T-cell (primary cell): ENCODE measurements at regions of chr1 and their contacts with region 1.

Region 1: GRCh38 chr1:47192458-47193384 is 2.9 kb upstream of the PDZK1IP1 start:
- DNase-seq: peak; percentile 8 to 77 (median 49)
- ATAC-seq: peak; percentile 57 to 77 (median 74)
- H3K4me3 ChIP-seq: no peak overlapping the region
- H3K4me3 Mint-ChIP-seq: no peak overlapping the region
- H3K27ac ChIP-seq: no peak overlapping the region
- H3K27ac Mint-ChIP-seq: no peak overlapping the region
- H3K4me1 ChIP-seq: peaks cover 0 to 6% of the 10 kb centered on the region in 2 experiments
- H3K4me1 Mint-ChIP-seq: no peaks in the 10 kb centered on the region
- H3K27me3 ChIP-seq: peaks cover 0 to 32% of the 10 kb centered on the region in 2 experiments
- H3K27me3 Mint-ChIP-seq: peaks cover 6 to 16% of the 10 kb centered on the region in 2 donors

Region 2: DNA sequence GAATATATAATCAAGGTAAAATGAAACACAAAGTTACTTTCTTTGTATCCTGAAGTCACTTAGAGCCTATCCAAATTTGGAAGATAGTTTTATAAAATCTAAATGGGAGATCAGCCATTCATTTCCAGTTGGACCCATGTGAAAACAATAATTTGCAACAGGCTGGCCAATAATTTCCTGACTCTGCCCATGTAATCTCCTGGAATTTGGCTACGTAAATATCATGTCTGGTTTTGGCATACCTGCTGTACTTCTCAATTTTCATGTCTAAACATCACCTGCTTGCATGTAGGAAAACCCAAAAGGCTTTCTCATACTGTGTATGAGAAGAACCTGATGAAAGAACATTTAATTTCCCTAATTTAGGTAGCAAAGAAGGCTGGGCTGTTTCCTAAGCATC is 133.3 kb before region 1 on chr1:
- CTCF ChIA-PET with region 1: no interaction called
- POLR2A ChIA-PET with region 1: no interaction called
- DNase-seq: no peak
- ATAC-seq: no peak
- H3K4me3 ChIP-seq: no peak overlapping the region
- H3K4me3 Mint-ChIP-seq: no peak overlapping the region
- H3K27ac ChIP-seq: no peak overlapping the region
- H3K27ac Mint-ChIP-seq: no peak overlapping the region
- H3K4me1 ChIP-seq: no peaks in the 10 kb centered on the region
- H3K4me1 Mint-ChIP-seq: peaks cover 0 to 8% (median 5%) of the 10 kb centered on the region in 3 donors
- H3K27me3 ChIP-seq: peaks cover 0 to 5% of the 10 kb centered on the region in 2 experiments
- H3K27me3 Mint-ChIP-seq: peaks cover 35 to 37% of the 10 kb centered on the region in 2 donors

Region 3: DNA sequence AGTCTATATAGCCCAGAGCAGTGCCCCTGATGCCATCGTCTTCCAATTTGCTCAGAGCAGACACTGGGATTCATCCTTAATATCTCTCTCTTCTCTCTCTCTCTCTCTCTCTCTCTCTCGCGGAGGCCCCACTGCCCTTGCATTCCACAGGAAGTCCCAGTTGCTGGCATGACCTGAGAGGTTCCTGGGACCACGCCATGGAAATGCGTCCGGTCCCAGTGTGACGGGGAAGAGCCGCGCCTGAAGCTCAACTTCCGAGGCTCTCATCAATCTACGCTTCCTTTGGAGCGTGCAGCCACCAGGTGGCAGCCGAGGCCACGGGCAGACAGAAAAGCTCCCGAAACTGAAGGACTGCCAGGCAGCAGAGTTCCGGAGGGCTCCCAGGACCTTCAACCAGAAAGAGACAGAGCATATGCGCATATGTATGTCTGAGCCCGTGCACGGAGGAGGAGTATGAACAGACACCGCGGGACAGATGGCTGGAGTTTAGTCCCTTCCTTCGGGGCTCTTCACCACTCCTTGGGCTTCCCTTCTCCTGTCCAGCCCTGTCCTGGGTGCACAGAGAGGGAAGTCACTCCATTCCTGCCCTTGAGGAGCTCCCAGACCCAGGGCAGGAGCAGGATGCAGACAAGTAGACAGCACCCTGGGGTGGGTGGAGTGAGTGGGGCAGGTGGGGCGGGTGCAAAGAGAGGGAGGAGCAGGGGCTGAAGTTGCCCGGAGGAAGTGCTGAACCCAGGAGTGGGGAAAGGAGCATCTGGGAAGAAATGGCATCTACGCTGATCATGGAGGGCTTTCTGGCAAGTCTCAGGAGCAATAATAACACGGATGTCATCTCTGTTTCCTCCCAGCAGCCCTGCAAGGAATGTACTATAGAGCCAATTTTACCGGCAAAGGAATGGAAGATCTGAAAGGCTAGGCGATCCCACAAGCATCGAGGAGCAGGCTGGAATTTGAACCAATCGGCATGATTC is 13.4 kb before region 1 on chr1:
- CTCF ChIA-PET with region 1: interaction called, 6 to 15 read pairs
- POLR2A ChIA-PET with region 1: no interaction called
- DNase-seq: peak; percentile 25 to 75 (median 55)
- ATAC-seq: peak; percentile 70 to 74 (median 71)
- H3K4me3 ChIP-seq: peak overlapping the region; percentile 38 to 57
- H3K4me3 Mint-ChIP-seq: peak overlapping the region; percentile 67 to 78 (median 70)
- H3K27ac ChIP-seq: no peak overlapping the region
- H3K27ac Mint-ChIP-seq: peak overlapping the region in 1 of 2 donors; percentile 76
- H3K4me1 ChIP-seq: peaks cover 0 to 15% of the 10 kb centered on the region in 2 experiments
- H3K4me1 Mint-ChIP-seq: peaks cover 11 to 22% (median 12%) of the 10 kb centered on the region in 3 donors
- H3K27me3 ChIP-seq: peaks cover 0 to 63% of the 10 kb centered on the region in 2 experiments
- H3K27me3 Mint-ChIP-seq: peaks cover 45 to 50% of the 10 kb centered on the region in 2 donors

Region 4: DNA sequence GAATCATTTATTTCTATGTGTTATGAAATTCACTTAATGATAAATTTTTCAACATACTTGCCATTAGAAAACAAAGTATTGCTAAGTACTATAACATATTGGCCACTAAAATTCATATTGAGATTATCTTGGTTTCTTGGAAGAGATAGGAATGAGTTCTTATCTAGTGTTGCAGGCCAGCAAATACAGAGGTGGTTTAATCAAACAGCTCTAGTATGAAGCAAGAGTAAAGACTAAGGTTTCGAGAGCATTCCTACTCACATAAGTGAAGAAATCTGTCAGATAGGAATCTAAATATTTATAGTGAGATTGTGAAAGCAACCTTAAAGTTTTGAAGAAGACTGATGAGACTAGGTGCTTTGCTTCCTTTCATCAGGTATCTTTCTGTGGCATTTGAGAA is 185.4 kb after region 1 on chr1:
- CTCF ChIA-PET with region 1: no interaction called
- POLR2A ChIA-PET with region 1: no interaction called
- DNase-seq: no peak
- ATAC-seq: no peak
- H3K4me3 ChIP-seq: no peak overlapping the region
- H3K4me3 Mint-ChIP-seq: no peak overlapping the region
- H3K27ac ChIP-seq: no peak overlapping the region
- H3K27ac Mint-ChIP-seq: no peak overlapping the region
- H3K4me1 ChIP-seq: no peaks in the 10 kb centered on the region
- H3K4me1 Mint-ChIP-seq: no peaks in the 10 kb centered on the region
- H3K27me3 ChIP-seq: no peaks in the 10 kb centered on the region
- H3K27me3 Mint-ChIP-seq: no peaks in the 10 kb centered on the region

Region 5: GRCh38 chr1:48439380-48439779 is 1246.7 kb after region 1 on chr1:
- CTCF ChIA-PET with region 1: no interaction called
- POLR2A ChIA-PET with region 1: no interaction called
- DNase-seq: no peak
- ATAC-seq: no peak
- H3K4me3 ChIP-seq: no peak overlapping the region
- H3K4me3 Mint-ChIP-seq: no peak overlapping the region
- H3K27ac ChIP-seq: no peak overlapping the region
- H3K27ac Mint-ChIP-seq: no peak overlapping the region
- H3K4me1 ChIP-seq: no peaks in the 10 kb centered on the region
- H3K4me1 Mint-ChIP-seq: no peaks in the 10 kb centered on the region
- H3K27me3 ChIP-seq: no peaks in the 10 kb centered on the region
- H3K27me3 Mint-ChIP-seq: no peaks in the 10 kb centered on the region